Lower lobe of right lung (tissue), 2 donors: ENCODE measurements at regions of chrX and their contacts with region 1.

Region 1: DNA sequence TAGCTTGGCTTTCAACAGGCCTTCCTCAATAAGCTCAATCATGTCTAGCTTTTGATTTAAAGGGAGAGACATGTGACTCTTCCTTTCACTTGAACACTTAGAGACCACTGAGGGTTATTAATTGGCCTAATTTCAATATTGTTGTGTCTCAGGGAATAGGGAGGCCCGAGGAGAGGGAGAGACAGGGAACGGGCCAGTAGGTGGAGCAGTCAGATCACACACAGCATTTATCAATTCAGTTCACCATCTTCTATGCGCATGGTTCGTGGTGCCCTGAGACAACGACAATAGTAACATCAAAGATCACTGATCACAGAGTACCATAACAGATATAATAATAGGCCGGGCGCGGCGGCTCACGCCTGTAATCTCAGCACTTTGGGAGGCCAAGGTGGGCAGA is 17.8 kb downstream of the ZNF81 start:
- DNase-seq: peak; percentile 29
- ATAC-seq: no peak
- H3K4me3 ChIP-seq: no peak overlapping the region
- H3K27ac ChIP-seq: no peak overlapping the region
- H3K4me1 ChIP-seq: no peaks in the 10 kb centered on the region
- H3K27me3 ChIP-seq: no peaks in the 10 kb centered on the region
- CTCF ChIP-seq: peak; percentile 38

Region 2: GRCh38 chrX:47706575-47706974 is 147.9 kb before region 1 on chrX:
- intact Hi-C with region 1: no loop called
- DNase-seq: no peak
- ATAC-seq: no peak
- H3K4me3 ChIP-seq: no peak overlapping the region
- H3K27ac ChIP-seq: no peak overlapping the region
- H3K4me1 ChIP-seq: no peaks in the 10 kb centered on the region
- H3K27me3 ChIP-seq: no peaks in the 10 kb centered on the region
- CTCF ChIP-seq: no peak

Region 3: GRCh38 chrX:47723689-47724088 is 130.8 kb before region 1 on chrX:
- intact Hi-C with region 1: no loop called
- DNase-seq: no peak
- ATAC-seq: no peak
- H3K4me3 ChIP-seq: no peak overlapping the region
- H3K27ac ChIP-seq: no peak overlapping the region
- H3K4me1 ChIP-seq: no peaks in the 10 kb centered on the region
- H3K27me3 ChIP-seq: no peaks in the 10 kb centered on the region
- CTCF ChIP-seq: no peak

Region 4: GRCh38 chrX:48021026-48021900 is 166.8 kb after region 1 on chrX:
- intact Hi-C with region 1: loop called (anchors 10 kb)
- DNase-seq: peak; percentile 78
- ATAC-seq: peak; percentile 87 to 91
- H3K4me3 ChIP-seq: peak overlapping the region; percentile 57
- H3K27ac ChIP-seq: peak overlapping the region; percentile 90
- H3K4me1 ChIP-seq: no peaks in the 10 kb centered on the region
- H3K27me3 ChIP-seq: no peaks in the 10 kb centered on the region
- CTCF ChIP-seq: no peak

Region 5: GRCh38 chrX:48737213-48737938 is 882.9 kb after region 1 on chrX:
- intact Hi-C with region 1: no loop called
- DNase-seq: peak; percentile 93
- ATAC-seq: peak; percentile 99 to 100
- H3K4me3 ChIP-seq: peak overlapping the region; percentile 62
- H3K27ac ChIP-seq: peak overlapping the region; percentile 89
- H3K4me1 ChIP-seq: no peaks in the 10 kb centered on the region
- H3K27me3 ChIP-seq: no peaks in the 10 kb centered on the region
- CTCF ChIP-seq: no peak